ENCODE measurements at regions of chr3 and their contacts with region 1.

Region 1: GRCh38 chr3:191328962-191329653 is at the start of gene CCDC50:
- DNase-seq: peak; percentile 72
- ATAC-seq: peak; percentile 74
- H3K4me3 ChIP-seq: peak within 1 kb of the TSS; percentile 86
- H3K27ac ChIP-seq: peak within 1 kb of the TSS; percentile 100
- H3K4me1 ChIP-seq: peaks cover 18% of the 10 kb centered on the region
- H3K27me3 ChIP-seq: no peaks in the 10 kb centered on the region
- CTCF ChIP-seq: no peak
- POLR2A ChIP-seq: no peak; the same call in 1 of the 2 replicates
- RAD21 ChIP-seq: no peak
- total RNA-seq, gene CCDC50: 63.1 and 110 TPM in 2 replicates

Region 2: DNA sequence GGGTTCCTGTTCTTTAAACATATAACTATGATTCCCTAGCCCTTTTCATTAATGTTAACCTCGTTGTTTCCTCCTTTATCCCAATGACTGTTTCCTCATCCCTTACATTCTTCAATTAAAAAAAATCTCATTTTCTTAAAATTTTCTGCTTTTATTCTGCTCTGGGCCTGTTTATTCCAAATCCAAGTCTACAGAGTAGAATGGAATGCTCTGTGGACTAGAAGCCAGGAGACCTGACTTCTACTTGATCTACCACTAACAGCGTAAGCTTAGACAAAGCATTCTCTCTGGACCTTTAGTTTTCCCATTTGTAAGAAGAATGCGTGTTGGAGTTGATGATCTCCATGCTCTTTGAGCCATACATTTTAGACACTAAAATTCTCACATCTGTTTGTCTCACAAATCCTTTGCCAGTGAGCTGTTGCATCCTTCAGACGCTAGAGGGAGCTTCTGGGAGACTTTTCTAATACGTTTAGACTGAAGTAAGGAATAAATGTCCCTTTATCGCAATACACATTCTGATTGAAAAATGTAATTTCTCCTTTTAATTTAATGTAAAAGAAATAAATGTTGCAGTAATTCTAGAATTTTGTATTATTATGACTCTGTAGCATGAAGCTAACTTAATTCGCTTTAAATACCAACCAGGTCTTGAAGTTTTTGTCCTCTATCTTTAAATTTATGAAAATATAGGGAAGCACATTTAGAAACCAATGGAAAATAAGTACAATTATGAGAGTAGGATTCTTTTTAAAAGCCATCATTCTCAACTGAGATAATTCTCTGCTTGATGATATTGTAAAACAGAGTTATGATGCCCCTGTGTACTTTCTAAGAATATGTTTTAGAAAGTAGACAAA is 444.9 kb before region 1 on chr3:
- CTCF ChIA-PET with region 1: no interaction called
- POLR2A ChIA-PET with region 1: no interaction called
- dilution Hi-C with region 1: no loop called
- in situ Hi-C with region 1: no loop called
- intact Hi-C with region 1: loop called (anchors 5 kb)
- DNase-seq: peak; percentile 66
- ATAC-seq: peak; percentile 94
- H3K4me3 ChIP-seq: no peak overlapping the region
- H3K27ac ChIP-seq: no peak overlapping the region
- H3K4me1 ChIP-seq: no peaks in the 10 kb centered on the region
- H3K27me3 ChIP-seq: no peaks in the 10 kb centered on the region
- CTCF ChIP-seq: peak; percentile 87
- POLR2A ChIP-seq: no peak
- RAD21 ChIP-seq: peak; percentile 70

Region 3: DNA sequence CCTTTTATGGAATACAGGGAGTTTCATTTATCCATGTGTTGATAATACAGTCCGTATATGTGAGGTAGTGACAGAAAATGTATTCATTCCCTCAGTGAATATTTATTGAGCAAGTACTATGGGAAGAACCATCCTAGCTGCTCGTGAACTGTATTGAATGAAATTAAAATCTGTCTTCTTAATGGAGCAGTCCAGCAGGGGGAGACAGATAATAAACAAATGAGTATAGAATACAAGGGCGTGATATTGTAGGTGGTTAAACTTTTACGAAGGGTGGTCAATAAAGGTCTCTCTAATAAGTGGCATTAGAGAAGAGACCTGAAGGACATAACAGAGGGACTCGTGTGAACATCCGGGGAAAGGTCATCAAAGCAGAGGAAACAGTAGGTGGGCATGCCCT is 192.8 kb before region 1 on chr3:
- CTCF ChIA-PET with region 1: no interaction called
- POLR2A ChIA-PET with region 1: no interaction called
- dilution Hi-C with region 1: no loop called
- in situ Hi-C with region 1: no loop called
- intact Hi-C with region 1: loop called (anchors 2 kb)
- DNase-seq: peak; percentile 18
- ATAC-seq: peak; percentile 49; the same call in 1 of the 2 replicates
- H3K4me3 ChIP-seq: no peak overlapping the region
- H3K27ac ChIP-seq: no peak overlapping the region
- H3K4me1 ChIP-seq: no peaks in the 10 kb centered on the region
- H3K27me3 ChIP-seq: no peaks in the 10 kb centered on the region
- CTCF ChIP-seq: peak; percentile 44
- POLR2A ChIP-seq: no peak
- RAD21 ChIP-seq: peak; percentile 46; the same call in 1 of the 2 replicates

Region 4: DNA sequence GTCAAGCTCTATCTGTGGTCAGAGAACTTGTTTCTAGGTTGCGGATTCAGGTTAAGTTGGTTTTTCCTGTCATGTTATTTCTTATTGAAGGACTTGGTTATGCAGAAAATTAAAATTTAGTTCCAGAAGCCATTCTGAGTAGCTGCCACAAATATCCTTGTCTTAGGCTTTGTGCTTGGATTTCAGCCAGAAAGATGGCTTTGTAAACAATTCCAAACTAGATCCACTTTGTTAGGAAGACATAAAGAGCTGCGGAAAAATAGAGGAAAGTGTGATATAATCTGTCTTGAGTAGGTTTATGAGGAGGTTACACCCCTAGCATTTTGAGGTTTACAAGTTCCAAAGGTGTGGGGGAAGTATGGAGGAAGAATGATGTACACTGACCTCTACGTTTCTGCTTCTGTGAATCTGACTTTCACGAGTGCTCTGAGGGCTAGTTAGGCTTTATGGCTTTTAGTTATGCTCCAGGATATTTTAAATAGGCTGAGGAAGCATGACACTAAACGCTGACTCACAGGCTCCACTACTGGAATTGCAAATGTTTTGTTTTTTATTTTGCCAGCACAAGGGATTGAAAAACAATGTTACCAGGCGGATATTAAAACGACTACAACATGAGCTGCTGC is 47.5 kb after region 1 on chr3:
- CTCF ChIA-PET with region 1: no interaction called
- POLR2A ChIA-PET with region 1: no interaction called
- dilution Hi-C with region 1: no loop called
- in situ Hi-C with region 1: no loop called
- intact Hi-C with region 1: loop called (anchors 5 kb)
- DNase-seq: peak; percentile 81
- ATAC-seq: peak; percentile 89
- H3K4me3 ChIP-seq: no peak overlapping the region
- H3K27ac ChIP-seq: peak overlapping the region; percentile 51; the same call in 1 of the 2 replicates
- H3K4me1 ChIP-seq: peaks cover 11% of the 10 kb centered on the region
- H3K27me3 ChIP-seq: no peaks in the 10 kb centered on the region
- CTCF ChIP-seq: no peak
- POLR2A ChIP-seq: no peak
- RAD21 ChIP-seq: no peak

Region 5: DNA sequence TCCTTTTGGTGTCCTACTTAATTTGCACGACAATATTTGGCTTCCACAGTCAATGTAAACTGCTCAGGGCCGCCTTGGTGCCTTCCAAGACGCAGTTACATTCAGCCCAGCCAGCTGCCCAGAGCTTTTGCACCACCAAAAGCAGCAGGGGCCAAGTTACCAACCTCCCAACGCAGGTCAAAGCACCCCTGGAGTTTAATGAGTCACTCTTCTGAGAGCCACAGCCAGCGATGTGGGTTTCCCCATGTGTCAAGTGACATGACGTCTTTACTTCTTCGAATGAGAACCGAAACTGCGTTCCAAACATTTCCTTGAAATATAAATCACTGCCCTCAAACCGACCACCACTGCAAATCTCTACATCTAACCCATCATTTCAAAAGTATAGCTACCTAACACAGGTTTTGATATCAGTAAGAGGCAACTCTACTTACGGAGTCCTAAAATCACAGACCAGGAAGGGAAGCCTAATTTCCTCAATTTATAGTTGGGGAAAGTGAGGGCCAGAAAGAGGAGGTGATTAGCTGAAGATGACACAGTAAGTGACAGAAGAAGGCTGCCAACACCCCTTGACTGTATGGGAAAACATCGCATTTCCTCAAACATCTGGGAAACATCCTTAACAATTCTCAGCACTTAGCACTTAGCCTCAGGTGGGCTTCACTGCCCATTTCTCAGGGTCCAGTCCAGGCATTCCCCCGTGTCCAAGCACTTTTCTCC is 1564.0 kb after region 1 on chr3:
- CTCF ChIA-PET with region 1: no interaction called
- POLR2A ChIA-PET with region 1: no interaction called
- dilution Hi-C with region 1: no loop called
- in situ Hi-C with region 1: loop called (anchors 25 kb)
- intact Hi-C with region 1: no loop called
- DNase-seq: peak; percentile 91
- ATAC-seq: peak; percentile 59
- H3K4me3 ChIP-seq: peak overlapping the region; percentile 19; the same call in 1 of the 2 replicates
- H3K27ac ChIP-seq: peak overlapping the region; percentile 55
- H3K4me1 ChIP-seq: peaks cover 14% of the 10 kb centered on the region
- H3K27me3 ChIP-seq: no peaks in the 10 kb centered on the region
- CTCF ChIP-seq: no peak
- POLR2A ChIP-seq: no peak
- RAD21 ChIP-seq: no peak